Activated naive CD4-positive, alpha-beta T cell treated with anti-CD3 and anti-CD28 coated beads for 36 hours (primary cell): ENCODE measurements at regions of chr12 and their contacts with region 1.

Region 1: GRCh38 chr12:122813310-122813713 is 21.9 kb upstream of the HIP1R start:
- DNase-seq: no peak
- H3K4me3 Mint-ChIP-seq: no peak overlapping the region
- H3K27ac Mint-ChIP-seq: no peak overlapping the region
- H3K4me1 Mint-ChIP-seq: no peaks in the 10 kb centered on the region
- H3K27me3 Mint-ChIP-seq: no peaks in the 10 kb centered on the region

Region 2: GRCh38 chr12:122571821-122572220 is 241.5 kb before region 1 on chr12:
- CTCF ChIA-PET with region 1: no interaction called
- intact Hi-C with region 1: no loop called
- DNase-seq: no peak
- H3K4me3 Mint-ChIP-seq: no peak overlapping the region
- H3K27ac Mint-ChIP-seq: no peak overlapping the region
- H3K4me1 Mint-ChIP-seq: no peaks in the 10 kb centered on the region
- H3K27me3 Mint-ChIP-seq: no peaks in the 10 kb centered on the region

Region 3: DNA sequence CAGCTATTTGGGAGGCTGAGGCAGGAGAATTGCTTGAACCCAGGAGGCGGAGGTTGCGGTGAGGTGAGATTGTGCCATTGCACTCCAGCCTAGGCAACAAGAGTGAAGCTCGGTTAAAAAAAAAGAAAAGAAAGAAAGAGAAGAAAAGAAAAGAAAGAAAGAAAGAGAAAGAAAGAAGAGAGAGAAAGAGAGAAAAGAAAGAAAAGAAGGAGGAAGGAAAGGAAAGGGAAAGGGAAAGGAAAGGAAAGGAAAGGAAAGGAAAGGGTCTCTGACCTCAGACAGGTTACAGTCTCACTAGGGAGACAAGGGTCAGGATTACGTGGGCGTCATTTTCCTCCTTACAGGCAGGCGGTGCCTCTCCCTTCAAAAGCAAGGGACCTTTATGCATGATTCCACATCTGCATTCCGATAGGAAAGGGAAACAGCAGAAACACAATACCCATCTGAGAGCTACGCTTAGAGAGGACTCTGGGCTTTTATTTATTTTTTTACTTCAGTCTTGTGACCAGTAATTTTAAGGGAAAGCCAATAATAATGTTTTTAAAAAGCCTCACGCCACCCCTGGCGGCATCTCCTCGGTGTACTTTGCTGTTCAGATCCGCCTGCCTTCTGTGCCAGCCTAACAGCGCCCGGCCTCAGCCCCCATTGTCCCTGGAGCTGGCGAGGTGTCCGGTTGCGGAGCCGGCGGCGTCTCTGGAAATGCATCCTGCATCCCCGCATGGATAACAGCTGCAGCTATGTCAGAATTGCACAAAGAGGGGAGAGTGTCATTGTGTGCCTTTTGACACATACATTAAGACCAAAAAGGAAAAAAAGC is 21.0 kb after region 1 on chr12:
- CTCF ChIA-PET with region 1: no interaction called
- intact Hi-C with region 1: loop called (anchors 2 kb)
- DNase-seq: peak; percentile 19
- H3K4me3 Mint-ChIP-seq: peak overlapping the region; percentile 87
- H3K27ac Mint-ChIP-seq: peak overlapping the region; percentile 62
- H3K4me1 Mint-ChIP-seq: peaks cover 22% of the 10 kb centered on the region
- H3K27me3 Mint-ChIP-seq: peaks cover 2% of the 10 kb centered on the region